Dendritic cell treated with granulocyte-macrophage colony-stimulating factor and Interleukin-4, amounts not matched to agents 40 ng/mL and 50 ng/mL, for 4 days (primary cell): ENCODE measurements at regions of chr16 and their contacts with region 1.

Region 1: GRCh38 chr16:13919683-13920509 is at the start of gene ERCC4:
- H3K4me3 Mint-ChIP-seq: peak within 1 kb of the TSS; percentile 94
- H3K27ac Mint-ChIP-seq: peak within 1 kb of the TSS; percentile 94
- H3K4me1 Mint-ChIP-seq: peaks cover 30% of the 10 kb centered on the region
- H3K27me3 Mint-ChIP-seq: peaks cover 7% of the 10 kb centered on the region

Region 2: GRCh38 chr16:13902677-13903076 is 17.2 kb before region 1 on chr16:
- intact Hi-C with region 1: loop called (anchors 1 kb)
- H3K4me3 Mint-ChIP-seq: no peak overlapping the region
- H3K27ac Mint-ChIP-seq: no peak overlapping the region
- H3K4me1 Mint-ChIP-seq: peaks cover 7% of the 10 kb centered on the region
- H3K27me3 Mint-ChIP-seq: peaks cover 16% of the 10 kb centered on the region

Region 3: DNA sequence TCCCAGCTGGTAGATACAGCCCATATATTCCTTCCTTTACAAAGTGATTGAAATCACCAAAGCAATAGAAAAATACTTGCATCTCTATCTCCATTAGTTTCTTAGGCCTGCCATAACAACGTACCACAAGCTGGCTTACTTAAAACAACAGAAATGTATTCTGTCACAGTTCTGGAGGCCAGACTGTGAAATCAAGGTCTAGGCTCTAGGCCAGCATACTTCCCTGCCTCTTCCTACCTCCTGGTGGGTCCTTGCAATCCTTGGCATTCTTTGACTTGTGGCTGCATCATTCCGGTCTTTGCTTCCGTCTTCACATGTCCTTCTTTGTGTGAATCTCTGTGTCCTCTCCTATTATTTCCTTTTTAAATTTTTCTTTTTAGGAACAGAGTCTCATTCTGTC is 62.6 kb after region 1 on chr16:
- intact Hi-C with region 1: no loop called
- H3K4me3 Mint-ChIP-seq: no peak overlapping the region
- H3K27ac Mint-ChIP-seq: no peak overlapping the region
- H3K4me1 Mint-ChIP-seq: no peaks in the 10 kb centered on the region
- H3K27me3 Mint-ChIP-seq: peaks cover 14% of the 10 kb centered on the region

Region 4: DNA sequence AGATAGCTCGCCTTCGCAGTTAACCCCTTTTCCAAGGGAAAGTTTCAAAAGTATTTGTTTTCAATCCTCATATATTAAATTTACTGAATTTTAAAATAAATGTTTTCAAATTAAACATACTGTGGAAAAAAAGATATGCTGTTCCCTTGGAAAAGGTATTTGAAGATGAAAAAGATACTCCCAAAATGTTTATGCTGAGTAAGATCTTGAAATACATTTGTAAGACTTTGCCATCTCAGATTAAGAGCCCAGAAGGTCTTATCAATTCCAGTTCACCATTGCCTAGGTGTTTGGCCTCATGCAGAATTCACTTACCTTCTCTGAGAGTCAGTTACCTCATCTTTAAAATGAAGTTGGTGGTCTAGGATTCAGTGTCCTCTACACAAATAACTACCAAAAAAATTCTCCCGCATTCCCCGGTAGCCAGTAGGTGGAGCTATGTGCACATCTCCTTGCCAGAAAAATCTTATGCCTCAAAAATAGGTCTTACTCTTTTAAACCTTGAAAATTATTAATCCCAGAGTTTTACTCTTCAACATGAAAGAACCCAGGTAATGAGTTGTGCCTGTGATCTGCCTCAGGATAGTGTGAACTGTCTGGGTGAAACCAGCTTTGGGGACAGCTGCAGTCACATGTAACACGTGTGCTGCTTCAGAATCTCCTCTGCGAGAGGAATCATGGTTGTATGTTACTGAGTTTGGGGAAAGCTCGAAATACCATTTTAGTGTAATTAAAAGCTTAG is 329.6 kb after region 1 on chr16:
- intact Hi-C with region 1: loop called (anchors 2 kb)
- H3K4me3 Mint-ChIP-seq: no peak overlapping the region
- H3K27ac Mint-ChIP-seq: no peak overlapping the region
- H3K4me1 Mint-ChIP-seq: no peaks in the 10 kb centered on the region
- H3K27me3 Mint-ChIP-seq: no peaks in the 10 kb centered on the region

Region 5: GRCh38 chr16:14285513-14286385 is 365.9 kb after region 1 on chr16:
- intact Hi-C with region 1: loop called (anchors 5 kb)
- H3K4me3 Mint-ChIP-seq: peak overlapping the region; percentile 82
- H3K27ac Mint-ChIP-seq: peak overlapping the region; percentile 91
- H3K4me1 Mint-ChIP-seq: peaks cover 60% of the 10 kb centered on the region
- H3K27me3 Mint-ChIP-seq: peaks cover 2% of the 10 kb centered on the region

Region 6: DNA sequence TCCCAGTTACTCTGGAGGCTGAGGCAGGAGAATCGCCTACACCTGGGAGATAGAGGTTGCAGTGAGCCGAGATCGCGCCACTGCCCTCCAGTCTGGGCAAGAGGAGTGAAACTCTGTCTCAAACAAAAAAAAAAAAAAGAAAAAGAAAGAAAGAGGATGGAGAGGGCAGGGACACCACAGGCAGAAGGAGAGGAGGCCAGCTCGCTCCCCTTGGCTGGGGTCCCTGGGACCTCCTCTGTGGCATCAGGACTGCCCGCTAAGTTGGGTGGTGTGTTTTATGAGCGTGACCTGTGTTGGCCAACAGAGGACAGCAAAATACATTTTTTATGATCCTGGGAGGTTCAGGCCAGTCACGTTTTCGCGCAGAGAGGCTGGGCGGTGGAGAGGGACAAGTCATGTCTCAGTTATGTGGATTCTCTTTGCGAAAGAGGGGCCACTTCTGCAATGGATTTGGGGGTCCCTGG is 380.8 kb after region 1 on chr16:
- intact Hi-C with region 1: loop called (anchors 5 kb)
- H3K4me3 Mint-ChIP-seq: peak overlapping the region; percentile 86
- H3K27ac Mint-ChIP-seq: peak overlapping the region; percentile 88
- H3K4me1 Mint-ChIP-seq: peaks cover 52% of the 10 kb centered on the region
- H3K27me3 Mint-ChIP-seq: peaks cover 50% of the 10 kb centered on the region

Region 7: DNA sequence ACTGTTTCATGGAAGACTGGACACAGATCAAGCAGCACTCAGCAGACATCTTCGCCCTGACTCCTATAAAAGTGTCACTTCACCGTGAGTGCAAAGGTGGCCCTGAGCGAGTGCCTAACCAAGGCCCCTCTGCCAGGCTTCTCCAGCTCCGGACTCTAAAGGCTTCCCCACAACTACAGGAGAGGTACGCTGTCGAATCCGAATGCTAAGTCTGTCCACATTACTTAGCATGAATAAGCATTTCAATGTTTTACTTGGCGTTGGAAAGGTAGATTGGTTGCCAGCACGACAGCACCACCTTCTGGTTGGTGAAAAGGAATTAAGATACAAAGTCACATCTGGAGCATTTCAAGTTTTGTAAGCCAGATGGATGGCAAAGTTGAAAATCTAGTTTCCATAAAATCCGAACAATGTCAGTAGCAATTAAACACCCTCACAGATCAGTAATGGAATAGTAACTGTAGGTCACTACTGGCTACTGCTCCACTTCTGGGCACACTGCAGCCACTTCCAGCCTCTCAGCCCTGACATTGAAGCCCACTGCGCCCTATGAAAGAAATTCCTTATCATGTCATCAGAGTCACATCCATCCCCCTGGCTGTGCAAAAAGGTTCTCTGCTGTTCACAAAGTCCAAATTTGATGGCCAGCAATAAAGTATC is 609.2 kb after region 1 on chr16:
- intact Hi-C with region 1: loop called (anchors 2 kb)
- H3K4me3 Mint-ChIP-seq: no peak overlapping the region
- H3K27ac Mint-ChIP-seq: no peak overlapping the region
- H3K4me1 Mint-ChIP-seq: peaks cover 15% of the 10 kb centered on the region
- H3K27me3 Mint-ChIP-seq: no peaks in the 10 kb centered on the region